AG04450 (cell line): ENCODE measurements at regions of chr1 and their contacts with region 1.

Region 1: GRCh38 chr1:35316264-35316663 is 47.8 kb downstream of the ZMYM4 start:
- DNase-seq: no peak
- H3K4me3 ChIP-seq: no peak overlapping the region
- H3K27ac ChIP-seq: no peak overlapping the region
- H3K27me3 ChIP-seq: no peaks in the 10 kb centered on the region
- CTCF ChIP-seq: no peak

Region 2: GRCh38 chr1:35173909-35174540 is 142.2 kb before region 1 on chr1:
- CTCF ChIA-PET with region 1: no interaction called
- POLR2A ChIA-PET with region 1: no interaction called
- DNase-seq: no peak
- H3K4me3 ChIP-seq: no peak overlapping the region
- H3K27ac ChIP-seq: no peak overlapping the region
- H3K27me3 ChIP-seq: no peaks in the 10 kb centered on the region
- CTCF ChIP-seq: no peak

Region 3: DNA sequence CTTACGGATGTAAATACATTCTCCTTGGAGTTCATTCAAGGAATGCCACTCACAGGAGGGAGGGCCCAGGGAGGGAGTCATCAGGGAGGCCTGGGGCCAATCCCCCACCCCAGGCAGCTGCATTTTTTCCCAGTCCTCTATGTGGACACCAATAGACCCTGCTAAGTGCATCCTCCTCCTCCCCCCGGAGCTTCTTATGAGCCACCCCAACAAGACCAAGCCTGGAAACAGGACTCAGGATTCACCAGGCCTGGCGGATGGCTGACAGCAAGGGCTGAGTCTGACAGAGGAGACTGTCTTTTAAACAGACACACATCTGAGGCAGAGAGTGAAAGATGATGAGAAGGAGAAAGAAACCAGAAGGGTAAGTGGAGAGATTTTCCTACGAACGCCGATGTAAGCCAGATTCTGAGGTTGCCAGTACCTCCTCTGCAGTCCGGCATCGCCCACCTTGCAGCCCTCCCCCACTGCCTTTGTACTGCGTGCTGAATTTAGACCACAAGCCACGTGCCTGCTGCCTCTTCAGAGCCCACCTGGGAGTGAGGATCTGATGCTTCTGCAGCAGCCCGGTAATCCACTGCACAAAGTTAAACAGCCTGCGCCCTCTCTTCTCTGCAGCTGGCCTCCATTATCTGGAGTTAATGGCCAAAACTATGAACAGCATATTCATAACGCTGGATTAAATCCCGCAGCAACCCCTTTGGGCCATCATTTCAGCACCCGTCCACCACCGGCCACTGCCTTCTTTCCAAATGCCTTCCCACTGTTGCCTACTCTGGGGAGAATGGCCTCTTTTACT is 105.7 kb before region 1 on chr1:
- CTCF ChIA-PET with region 1: no interaction called
- POLR2A ChIA-PET with region 1: no interaction called
- DNase-seq: no peak
- H3K4me3 ChIP-seq: no peak overlapping the region
- H3K27ac ChIP-seq: no peak overlapping the region
- H3K27me3 ChIP-seq: no peaks in the 10 kb centered on the region
- CTCF ChIP-seq: no peak

Region 4: GRCh38 chr1:35288761-35289160 is 27.5 kb before region 1 on chr1:
- CTCF ChIA-PET with region 1: interaction called, 11 read pairs
- POLR2A ChIA-PET with region 1: no interaction called
- DNase-seq: no peak
- H3K4me3 ChIP-seq: no peak overlapping the region
- H3K27ac ChIP-seq: no peak overlapping the region
- H3K27me3 ChIP-seq: no peaks in the 10 kb centered on the region
- CTCF ChIP-seq: no peak